IMR-90 (cell line): ENCODE measurements at regions of chr3 and their contacts with region 1.

Region 1: DNA sequence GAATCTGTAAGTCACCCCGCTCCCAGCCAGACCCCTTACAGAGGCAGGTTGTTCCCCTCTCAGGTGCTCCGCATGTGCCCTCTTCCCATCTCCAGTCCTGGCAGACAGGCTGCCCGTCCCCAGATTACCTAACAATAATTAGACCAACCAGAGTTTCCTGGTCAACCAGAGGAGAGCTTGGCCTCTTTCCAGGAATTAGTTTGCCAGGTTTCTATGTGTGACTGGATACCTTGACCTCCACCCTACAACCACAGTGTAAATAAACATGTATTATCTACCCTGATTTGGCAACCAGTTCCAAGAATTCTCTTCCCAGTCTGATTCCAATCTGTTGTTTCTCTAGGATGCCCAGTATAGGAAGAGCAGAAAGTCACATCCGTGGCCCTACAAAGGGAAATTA is 178.0 kb upstream of the UMPS start:
- DNase-seq: peak; percentile 4
- ATAC-seq: no peak
- H3K4me3 ChIP-seq: no peak overlapping the region
- H3K27ac ChIP-seq: no peak overlapping the region
- H3K4me1 ChIP-seq: no peaks in the 10 kb centered on the region
- H3K27me3 ChIP-seq: peaks cover 15% of the 10 kb centered on the region
- CTCF ChIP-seq: no peak
- POLR2A ChIP-seq: no peak
- RAD21 ChIP-seq: no peak

Region 2: DNA sequence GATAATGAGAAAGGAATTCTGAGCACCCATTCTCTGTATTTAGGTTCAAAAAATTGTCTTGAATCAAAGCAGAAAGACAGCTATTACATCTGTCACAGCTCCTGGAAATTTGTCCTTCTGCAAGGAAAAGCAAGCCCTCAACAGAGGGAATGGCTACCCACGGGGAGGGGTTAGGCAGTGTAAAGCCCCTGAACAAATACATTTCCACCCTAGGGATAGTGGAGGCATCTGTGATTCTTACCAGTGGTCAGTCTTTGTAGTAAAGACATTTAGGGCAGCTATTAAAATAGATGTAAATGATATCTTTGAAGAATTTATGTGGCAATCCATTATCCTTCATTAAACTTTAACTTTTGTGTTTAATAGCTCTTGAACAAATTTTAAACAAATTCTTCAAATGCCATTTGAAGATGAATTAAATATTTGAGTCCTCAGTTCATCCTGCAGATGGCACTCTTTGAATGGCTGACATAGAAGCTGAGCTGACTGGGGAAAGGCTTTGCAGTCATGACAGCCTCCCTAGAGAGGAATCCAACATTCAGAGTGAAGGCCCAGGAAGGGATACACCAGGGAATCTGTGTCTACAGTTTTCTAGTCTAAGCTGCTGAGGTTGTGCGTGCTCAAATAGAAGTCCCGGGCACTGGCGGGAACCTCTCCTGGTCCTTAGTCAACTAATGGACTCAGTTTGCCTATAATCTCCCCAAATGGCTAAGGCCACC is 200.7 kb before region 1 on chr3:
- CTCF ChIA-PET with region 1: interaction called, 4 read pairs
- POLR2A ChIA-PET with region 1: no interaction called
- dilution Hi-C with region 1: no loop called
- in situ Hi-C with region 1: no loop called
- intact Hi-C with region 1: loop called (anchors 1 kb)
- DNase-seq: peak; percentile 78
- ATAC-seq: peak; percentile 96
- H3K4me3 ChIP-seq: no peak overlapping the region
- H3K27ac ChIP-seq: no peak overlapping the region
- H3K4me1 ChIP-seq: no peaks in the 10 kb centered on the region
- H3K27me3 ChIP-seq: peaks cover 7% of the 10 kb centered on the region; the same call in 1 of the 2 replicates
- CTCF ChIP-seq: peak; percentile 75
- POLR2A ChIP-seq: no peak
- RAD21 ChIP-seq: peak; percentile 90

Region 3: GRCh38 chr3:124492811-124493210 is 59.4 kb before region 1 on chr3:
- CTCF ChIA-PET with region 1: no interaction called
- POLR2A ChIA-PET with region 1: no interaction called
- dilution Hi-C with region 1: no loop called
- in situ Hi-C with region 1: no loop called
- intact Hi-C with region 1: loop called (anchors 2 kb)
- DNase-seq: peak; percentile 55
- ATAC-seq: peak; percentile 49
- H3K4me3 ChIP-seq: no peak overlapping the region
- H3K27ac ChIP-seq: no peak overlapping the region
- H3K4me1 ChIP-seq: no peaks in the 10 kb centered on the region
- H3K27me3 ChIP-seq: peaks cover 4% of the 10 kb centered on the region; the same call in 1 of the 2 replicates
- CTCF ChIP-seq: peak; percentile 33
- POLR2A ChIP-seq: no peak
- RAD21 ChIP-seq: peak; percentile 25; the same call in 1 of the 2 replicates

Region 4: GRCh38 chr3:125107861-125108567 is 555.8 kb after region 1 on chr3:
- CTCF ChIA-PET with region 1: no interaction called
- POLR2A ChIA-PET with region 1: no interaction called
- dilution Hi-C with region 1: no loop called
- in situ Hi-C with region 1: no loop called
- intact Hi-C with region 1: no loop called
- DNase-seq: peak; percentile 95
- ATAC-seq: peak; percentile 53
- H3K4me3 ChIP-seq: no peak overlapping the region
- H3K27ac ChIP-seq: peak overlapping the region; percentile 71
- H3K4me1 ChIP-seq: peaks cover 40% of the 10 kb centered on the region
- H3K27me3 ChIP-seq: no peaks in the 10 kb centered on the region
- CTCF ChIP-seq: no peak
- POLR2A ChIP-seq: no peak
- RAD21 ChIP-seq: no peak